IMR-90 (cell line): ENCODE measurements at regions of chr22 and their contacts with region 1.

Region 1: GRCh38 chr22:23240639-23241389 is 60.5 kb downstream of the BCR start:
- DNase-seq: no peak
- ATAC-seq: no peak
- H3K4me3 ChIP-seq: no peak overlapping the region
- H3K27ac ChIP-seq: no peak overlapping the region
- H3K4me1 ChIP-seq: peaks cover 20% of the 10 kb centered on the region
- H3K27me3 ChIP-seq: no peaks in the 10 kb centered on the region
- CTCF ChIP-seq: 0 out of 2 replicates have a peak, but pooled peaks have one; percentile 8
- POLR2A ChIP-seq: no peak
- RAD21 ChIP-seq: no peak

Region 2: DNA sequence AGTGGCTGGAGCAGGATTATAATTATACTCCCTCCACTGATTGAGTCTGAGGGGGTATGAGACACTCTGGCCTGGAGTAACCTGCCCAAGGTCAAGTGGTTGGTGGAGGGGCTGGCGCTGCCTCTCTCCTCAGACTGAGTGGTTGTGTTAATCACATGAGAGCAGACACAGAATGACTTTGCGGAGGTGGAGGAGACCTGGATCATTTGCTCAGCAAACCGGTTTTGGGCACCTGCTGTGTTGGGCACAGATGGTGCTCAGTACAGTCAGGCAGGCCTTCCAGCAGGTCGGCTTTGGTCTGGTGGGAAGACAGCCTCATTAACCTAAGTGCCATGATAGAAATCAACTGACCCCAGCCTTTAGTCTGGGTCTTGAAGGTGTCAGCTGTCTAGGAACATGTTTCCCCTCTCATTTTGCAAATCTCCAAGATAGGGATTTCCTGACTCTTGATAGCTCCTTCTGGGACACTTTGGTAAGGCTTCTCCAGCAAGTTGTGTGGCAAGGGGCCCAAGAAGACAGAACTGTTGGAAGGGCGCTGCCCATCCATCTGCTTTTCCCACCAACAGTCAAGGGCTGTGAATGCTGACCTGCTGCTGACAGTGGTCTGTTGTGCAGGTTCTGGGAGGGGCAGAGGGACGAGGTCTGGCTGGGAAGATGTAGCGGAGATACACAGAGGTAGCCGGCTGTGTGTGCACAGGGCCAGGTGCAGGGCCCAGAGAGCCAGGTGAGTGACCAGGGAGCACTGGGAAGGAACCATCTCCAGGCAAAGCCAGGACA is 48.4 kb before region 1 on chr22:
- CTCF ChIA-PET with region 1: no interaction called
- POLR2A ChIA-PET with region 1: interaction called, 7 read pairs
- dilution Hi-C with region 1: no loop called
- in situ Hi-C with region 1: loop called (anchors 5 kb)
- intact Hi-C with region 1: no loop called
- DNase-seq: no peak
- ATAC-seq: no peak
- H3K4me3 ChIP-seq: no peak overlapping the region
- H3K27ac ChIP-seq: no peak overlapping the region
- H3K4me1 ChIP-seq: peaks cover 10% of the 10 kb centered on the region
- H3K27me3 ChIP-seq: no peaks in the 10 kb centered on the region
- CTCF ChIP-seq: no peak
- POLR2A ChIP-seq: no peak
- RAD21 ChIP-seq: no peak

Region 3: GRCh38 chr22:23431337-23432072 is 190.7 kb after region 1 on chr22:
- CTCF ChIA-PET with region 1: no interaction called
- POLR2A ChIA-PET with region 1: no interaction called
- dilution Hi-C with region 1: no loop called
- in situ Hi-C with region 1: no loop called
- intact Hi-C with region 1: no loop called
- DNase-seq: no peak
- ATAC-seq: no peak
- H3K4me3 ChIP-seq: no peak overlapping the region
- H3K27ac ChIP-seq: no peak overlapping the region
- H3K4me1 ChIP-seq: no peaks in the 10 kb centered on the region
- H3K27me3 ChIP-seq: no peaks in the 10 kb centered on the region; the same call in 1 of the 2 replicates
- CTCF ChIP-seq: no peak
- POLR2A ChIP-seq: no peak
- RAD21 ChIP-seq: no peak